ENCODE measurements at regions of chr9 and their contacts with region 1.

Region 1: DNA sequence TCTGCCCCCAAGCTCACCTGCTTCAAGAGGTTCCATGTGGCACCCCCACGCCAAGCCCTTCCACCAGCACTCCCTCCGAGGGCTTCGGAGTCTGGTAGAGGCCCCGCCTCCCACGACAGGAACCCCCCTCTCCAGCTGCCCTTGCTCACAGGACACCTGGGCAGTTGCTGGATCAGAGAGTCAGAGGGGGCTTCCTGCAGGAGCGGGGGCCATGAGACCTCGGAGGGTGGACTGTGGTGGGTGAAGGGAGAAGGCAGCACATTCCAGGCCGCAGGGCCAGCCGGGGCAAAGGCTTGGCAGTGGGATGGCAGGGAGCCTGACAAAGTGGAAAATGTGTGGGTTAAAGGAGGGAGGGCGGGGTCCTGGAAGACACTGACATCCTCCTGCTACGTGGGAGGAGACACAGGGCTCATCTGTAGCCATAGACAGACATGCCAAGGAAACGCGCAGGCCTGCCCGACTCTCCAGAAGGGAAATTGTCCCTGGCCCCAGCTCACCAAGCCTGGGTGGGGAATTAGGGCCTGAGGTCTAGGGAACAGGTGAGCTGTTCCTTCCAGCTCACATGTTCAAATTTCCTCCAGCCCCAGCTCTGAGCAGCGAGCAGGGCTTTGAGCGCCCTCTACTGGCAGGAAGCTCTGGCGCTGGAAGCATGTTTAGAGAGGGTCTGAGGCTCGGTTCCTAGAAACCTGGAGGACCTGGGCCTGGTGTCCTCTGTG is 74.2 kb downstream of the NTNG2 start:
- DNase-seq: peak; percentile 70 to 88 (median 81)
- H3K4me3 ChIP-seq: no peak overlapping the region
- H3K27ac ChIP-seq: peak overlapping the region in 1 of 59 donors; percentile 16
- H3K27me3 ChIP-seq: no peaks in the 10 kb centered on the region
- CTCF ChIP-seq: peak; percentile 69 to 98 (median 96)

Region 2: DNA sequence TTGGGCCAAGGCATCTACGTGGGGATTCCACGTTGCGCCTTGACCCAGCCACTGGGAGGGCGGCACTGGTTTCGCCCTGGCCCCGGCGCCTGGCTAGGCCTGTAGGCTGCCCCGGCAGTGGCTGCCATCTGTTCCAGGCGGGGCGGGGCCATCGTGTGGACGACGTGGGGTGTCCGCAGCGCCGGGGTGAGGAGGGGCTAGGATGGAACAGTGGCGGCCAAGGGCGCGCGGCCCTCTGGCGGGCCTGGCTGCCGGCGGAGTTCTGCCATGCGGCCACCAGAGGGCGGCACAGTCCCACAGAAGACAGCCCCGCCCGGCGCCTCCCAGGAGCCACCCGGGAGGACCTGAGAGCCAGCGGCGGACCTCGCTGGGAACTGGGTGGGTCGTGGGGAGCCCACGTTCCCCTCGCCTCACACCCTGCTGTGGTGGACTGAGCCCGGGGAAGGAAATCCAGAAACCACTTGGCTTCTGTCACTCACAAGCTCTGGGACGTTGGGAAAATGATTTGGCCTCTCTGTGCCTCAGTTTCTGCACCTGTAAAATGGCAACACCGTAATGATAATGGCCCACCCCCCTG is 473.7 kb before region 1 on chr9:
- intact Hi-C with region 1: loop called in 1 of 2 experiments (anchors 5 kb)
- DNase-seq: peak; percentile 57 to 87 (median 68)
- H3K4me3 ChIP-seq: peak overlapping the region in 37 of 59 donors; percentile 4 to 52 (median 30)
- H3K27ac ChIP-seq: no peak overlapping the region
- H3K27me3 ChIP-seq: no peaks in the 10 kb centered on the region
- CTCF ChIP-seq: peak; percentile 79 to 100 (median 98)

Region 3: GRCh38 chr9:132018957-132019405 is 217.1 kb before region 1 on chr9:
- intact Hi-C with region 1: loop called in 1 of 2 experiments (anchors 10 kb)
- DNase-seq: peak in 4 of 10 donors; percentile 39 to 59 (median 54)
- H3K4me3 ChIP-seq: no peak overlapping the region
- H3K27ac ChIP-seq: peak overlapping the region in 31 of 59 donors; percentile 0 to 73 (median 36)
- H3K27me3 ChIP-seq: no peaks in the 10 kb centered on the region
- CTCF ChIP-seq: peak in 51 of 56 donors; percentile 11 to 70 (median 44)

Region 4: DNA sequence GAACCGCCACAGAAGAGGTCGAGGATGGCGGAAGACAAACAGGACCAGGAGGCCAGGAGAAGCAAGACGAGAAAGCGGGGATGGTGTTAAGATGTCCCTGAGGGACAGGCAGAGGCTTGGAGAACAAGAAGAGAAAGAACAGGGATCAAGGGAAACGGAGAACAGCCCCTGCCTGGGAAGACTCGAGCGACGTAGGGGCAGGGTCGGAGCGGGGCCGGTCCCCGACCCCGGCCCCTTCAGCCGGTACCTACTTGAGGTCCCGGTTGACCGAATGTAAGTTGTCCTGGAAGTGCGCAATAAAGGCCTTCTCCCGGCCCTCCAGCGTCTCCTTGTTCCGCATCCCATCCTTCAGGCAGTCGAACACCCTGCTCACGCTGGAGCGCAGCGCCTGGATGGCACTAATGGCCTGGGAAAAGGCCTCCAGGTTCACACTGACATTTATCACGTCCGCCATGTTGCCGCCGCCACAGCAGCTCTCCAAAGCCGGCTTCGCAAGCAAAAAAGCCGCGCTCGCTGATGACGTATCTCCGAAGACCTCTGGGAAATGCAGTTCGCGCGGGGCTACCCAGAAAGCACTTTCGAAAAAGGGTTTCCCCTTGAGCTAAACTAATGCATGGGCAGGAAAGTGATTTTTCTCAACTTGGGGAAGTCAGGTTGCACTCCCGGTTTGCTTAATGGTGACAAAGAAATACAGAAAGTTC is 156.6 kb before region 1 on chr9 and contains the start of gene MED27:
- intact Hi-C with region 1: loop called in 1 of 2 experiments (anchors 10 kb)
- DNase-seq: peak; percentile 91 to 96 (median 94)
- H3K4me3 ChIP-seq: peak within 1 kb of the TSS; percentile 62 to 98 (median 90)
- H3K27ac ChIP-seq: peak within 1 kb of the TSS in 54 of 59 donors; percentile 5 to 94 (median 74)
- H3K27me3 ChIP-seq: no peaks in the 10 kb centered on the region
- CTCF ChIP-seq: peak in 32 of 56 donors; percentile 4 to 49 (median 20)
- total RNA-seq, gene MED27: 17.8 to 40.0 (median 27.6) TPM

Region 5: GRCh38 chr9:132169672-132170392 is 66.3 kb before region 1 on chr9:
- intact Hi-C with region 1: loop called (anchors 2 to 5 kb)
- DNase-seq: peak in 8 of 10 donors; percentile 52 to 80 (median 63)
- H3K4me3 ChIP-seq: no peak overlapping the region
- H3K27ac ChIP-seq: peak overlapping the region in 7 of 59 donors; percentile 1 to 52 (median 16)
- H3K27me3 ChIP-seq: no peaks in the 10 kb centered on the region
- CTCF ChIP-seq: peak; percentile 70 to 96 (median 87)

Region 6: GRCh38 chr9:132288361-132288760 is 52.3 kb after region 1 on chr9:
- intact Hi-C with region 1: no loop called
- DNase-seq: no peak
- H3K4me3 ChIP-seq: no peak overlapping the region
- H3K27ac ChIP-seq: no peak overlapping the region
- H3K27me3 ChIP-seq: no peaks in the 10 kb centered on the region
- CTCF ChIP-seq: no peak